Activated CD4-positive, alpha-beta T cell treated with anti-CD3 and anti-CD28 coated beads, Interleukin-2, amount 10 ng/mL, durations not matched to agents 7 days and 5 days (primary cell): ENCODE measurements at regions of chr2 and their contacts with region 1.

Region 1: GRCh38 chr2:9770308-9771100 is 72.8 kb upstream of the TAF1B start:
- DNase-seq: peak; percentile 66
- H3K4me3 Mint-ChIP-seq: no peak overlapping the region
- H3K27ac Mint-ChIP-seq: peak overlapping the region; percentile 19
- H3K4me1 Mint-ChIP-seq: peaks cover 15% of the 10 kb centered on the region
- H3K27me3 Mint-ChIP-seq: peaks cover 4% of the 10 kb centered on the region

Region 2: DNA sequence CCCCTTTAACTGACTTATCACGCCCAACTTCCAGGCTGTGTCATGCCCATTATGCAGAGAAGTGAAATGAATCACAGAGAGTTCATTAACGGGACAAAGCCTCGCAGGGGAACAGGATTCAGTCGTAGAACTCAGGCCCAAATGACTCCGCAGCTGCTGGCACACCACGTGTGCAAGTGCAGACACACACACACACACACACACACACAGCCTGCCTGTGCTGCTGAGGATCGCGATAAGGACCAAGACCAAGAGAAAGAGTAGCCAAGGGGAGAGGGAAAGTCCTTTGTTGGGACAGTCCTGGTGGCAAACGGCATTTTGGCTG is 17.3 kb before region 1 on chr2:
- CTCF ChIA-PET with region 1: interaction called, 63 read pairs
- POLR2A ChIA-PET with region 1: no interaction called
- DNase-seq: peak; percentile 51
- H3K4me3 Mint-ChIP-seq: peak overlapping the region; percentile 75
- H3K27ac Mint-ChIP-seq: peak overlapping the region; percentile 94
- H3K4me1 Mint-ChIP-seq: peaks cover 65% of the 10 kb centered on the region
- H3K27me3 Mint-ChIP-seq: peaks cover 16% of the 10 kb centered on the region

Region 3: GRCh38 chr2:9782197-9782719 is 11.8 kb after region 1 on chr2:
- CTCF ChIA-PET with region 1: interaction called, 31 read pairs
- POLR2A ChIA-PET with region 1: no interaction called
- DNase-seq: peak; percentile 86
- H3K4me3 Mint-ChIP-seq: peak overlapping the region; percentile 40
- H3K27ac Mint-ChIP-seq: peak overlapping the region; percentile 91
- H3K4me1 Mint-ChIP-seq: peaks cover 64% of the 10 kb centered on the region
- H3K27me3 Mint-ChIP-seq: peaks cover 2% of the 10 kb centered on the region

Region 4: GRCh38 chr2:9799665-9800632 is 29.4 kb after region 1 on chr2:
- CTCF ChIA-PET with region 1: interaction called, 28 read pairs
- POLR2A ChIA-PET with region 1: no interaction called
- DNase-seq: peak; percentile 86
- H3K4me3 Mint-ChIP-seq: peak overlapping the region; percentile 60
- H3K27ac Mint-ChIP-seq: peak overlapping the region; percentile 91
- H3K4me1 Mint-ChIP-seq: peaks cover 34% of the 10 kb centered on the region
- H3K27me3 Mint-ChIP-seq: peaks cover 5% of the 10 kb centered on the region